ENCODE measurements at regions of chr4 and their contacts with region 1.

Region 1: DNA sequence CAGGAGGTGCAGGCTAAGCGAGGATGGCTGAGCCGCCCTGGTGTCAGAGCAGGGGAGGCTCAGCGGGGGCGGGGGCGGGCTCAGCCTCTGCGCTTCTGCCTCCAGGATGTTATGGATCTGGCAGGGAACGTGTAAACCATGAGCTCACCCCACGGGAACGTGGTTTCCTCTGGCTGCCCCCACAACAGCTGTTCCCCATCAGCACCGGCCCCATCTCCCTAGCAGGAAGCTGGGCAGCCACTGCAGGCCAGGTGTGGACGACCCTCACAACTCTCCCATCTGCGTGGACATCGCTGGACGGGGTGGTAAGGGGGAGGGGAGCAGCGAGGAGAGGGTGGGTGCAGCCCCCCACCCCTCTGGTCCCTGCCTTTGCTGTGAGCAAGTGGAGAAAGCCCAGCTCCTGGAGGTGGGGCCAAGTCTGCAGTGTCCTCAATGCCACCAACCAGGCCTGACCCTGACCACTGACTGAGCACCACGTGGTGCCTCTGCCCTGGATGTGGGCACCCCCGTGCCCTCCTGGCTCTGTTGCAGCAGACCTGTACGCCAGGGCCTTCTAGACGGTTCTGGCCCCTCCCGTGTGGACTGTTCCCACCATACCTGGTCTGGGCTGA is 28.1 kb upstream of the SPON2 start:
- DNase-seq: peak in 1 of 9 donors; percentile 26
- ATAC-seq: no peak
- H3K4me3 ChIP-seq: peak overlapping the region; percentile 85
- H3K4me3 Mint-ChIP-seq: peak overlapping the region; percentile 29 to 93 (median 84)
- H3K27ac ChIP-seq: peak overlapping the region; percentile 68
- H3K27ac Mint-ChIP-seq: peak overlapping the region in 5 of 9 donors; percentile 19 to 99 (median 59)
- H3K4me1 ChIP-seq: peaks cover 21 to 59% of the 10 kb centered on the region in 2 donors
- H3K4me1 Mint-ChIP-seq: peaks cover 12 to 57% (median 43%) of the 10 kb centered on the region in 7 donors
- H3K27me3 ChIP-seq: no peaks in the 10 kb centered on the region
- H3K27me3 Mint-ChIP-seq: no peaks in the 10 kb centered on the region

Region 2: GRCh38 chr4:1011022-1011694 is 189.4 kb before region 1 on chr4 and contains the start of gene FGFRL1:
- CTCF ChIA-PET with region 1: no interaction called
- POLR2A ChIA-PET with region 1: no interaction called
- intact Hi-C with region 1: loop called in 1 of 2 experiments (anchors 1 kb)
- DNase-seq: peak; percentile 78 to 95 (median 87)
- ATAC-seq: peak; percentile 78
- H3K4me3 ChIP-seq: peak within 1 kb of the TSS; percentile 77
- H3K4me3 Mint-ChIP-seq: peak within 1 kb of the TSS; percentile 86 to 97 (median 89)
- H3K27ac ChIP-seq: peak within 1 kb of the TSS; percentile 83
- H3K27ac Mint-ChIP-seq: peak within 1 kb of the TSS; percentile 76 to 96 (median 92)
- H3K4me1 ChIP-seq: peaks cover 0 to 10% of the 10 kb centered on the region in 2 donors
- H3K4me1 Mint-ChIP-seq: peaks cover 15 to 21% (median 18%) of the 10 kb centered on the region in 7 donors
- H3K27me3 ChIP-seq: no peaks in the 10 kb centered on the region
- H3K27me3 Mint-ChIP-seq: peaks cover 24 to 31% (median 27%) of the 10 kb centered on the region in 5 donors
- total RNA-seq, gene FGFRL1: 10.6 to 28.1 (median 22.0) TPM

Region 3: GRCh38 chr4:1187182-1187581 is 13.3 kb before region 1 on chr4:
- CTCF ChIA-PET with region 1: no interaction called
- POLR2A ChIA-PET with region 1: interaction called, 5 read pairs
- intact Hi-C with region 1: loop called in 1 of 2 experiments (anchors 1 kb)
- DNase-seq: peak in 4 of 9 donors; percentile 44 to 54 (median 49)
- ATAC-seq: peak; percentile 94
- H3K4me3 ChIP-seq: no peak overlapping the region
- H3K4me3 Mint-ChIP-seq: peak overlapping the region in 1 of 10 donors; percentile 13
- H3K27ac ChIP-seq: no peak overlapping the region
- H3K27ac Mint-ChIP-seq: peak overlapping the region in 4 of 9 donors; percentile 4 to 59 (median 38)
- H3K4me1 ChIP-seq: peaks cover 0 to 24% of the 10 kb centered on the region in 2 donors
- H3K4me1 Mint-ChIP-seq: peaks cover 9 to 31% (median 15%) of the 10 kb centered on the region in 7 donors
- H3K27me3 ChIP-seq: no peaks in the 10 kb centered on the region
- H3K27me3 Mint-ChIP-seq: no peaks in the 10 kb centered on the region

Region 4: GRCh38 chr4:1216869-1217294 is 16.4 kb after region 1 on chr4:
- CTCF ChIA-PET with region 1: no interaction called
- POLR2A ChIA-PET with region 1: interaction called, 8 read pairs
- intact Hi-C with region 1: loop called (anchors 2 kb)
- DNase-seq: peak; percentile 47 to 75 (median 70)
- ATAC-seq: peak; percentile 83
- H3K4me3 ChIP-seq: peak overlapping the region; percentile 22
- H3K4me3 Mint-ChIP-seq: peak overlapping the region; percentile 61 to 77 (median 76)
- H3K27ac ChIP-seq: peak overlapping the region; percentile 52
- H3K27ac Mint-ChIP-seq: peak overlapping the region; percentile 26 to 84 (median 67)
- H3K4me1 ChIP-seq: peaks cover 25 to 27% of the 10 kb centered on the region in 2 donors
- H3K4me1 Mint-ChIP-seq: peaks cover 26 to 50% (median 32%) of the 10 kb centered on the region in 7 donors
- H3K27me3 ChIP-seq: no peaks in the 10 kb centered on the region
- H3K27me3 Mint-ChIP-seq: no peaks in the 10 kb centered on the region

Region 5: DNA sequence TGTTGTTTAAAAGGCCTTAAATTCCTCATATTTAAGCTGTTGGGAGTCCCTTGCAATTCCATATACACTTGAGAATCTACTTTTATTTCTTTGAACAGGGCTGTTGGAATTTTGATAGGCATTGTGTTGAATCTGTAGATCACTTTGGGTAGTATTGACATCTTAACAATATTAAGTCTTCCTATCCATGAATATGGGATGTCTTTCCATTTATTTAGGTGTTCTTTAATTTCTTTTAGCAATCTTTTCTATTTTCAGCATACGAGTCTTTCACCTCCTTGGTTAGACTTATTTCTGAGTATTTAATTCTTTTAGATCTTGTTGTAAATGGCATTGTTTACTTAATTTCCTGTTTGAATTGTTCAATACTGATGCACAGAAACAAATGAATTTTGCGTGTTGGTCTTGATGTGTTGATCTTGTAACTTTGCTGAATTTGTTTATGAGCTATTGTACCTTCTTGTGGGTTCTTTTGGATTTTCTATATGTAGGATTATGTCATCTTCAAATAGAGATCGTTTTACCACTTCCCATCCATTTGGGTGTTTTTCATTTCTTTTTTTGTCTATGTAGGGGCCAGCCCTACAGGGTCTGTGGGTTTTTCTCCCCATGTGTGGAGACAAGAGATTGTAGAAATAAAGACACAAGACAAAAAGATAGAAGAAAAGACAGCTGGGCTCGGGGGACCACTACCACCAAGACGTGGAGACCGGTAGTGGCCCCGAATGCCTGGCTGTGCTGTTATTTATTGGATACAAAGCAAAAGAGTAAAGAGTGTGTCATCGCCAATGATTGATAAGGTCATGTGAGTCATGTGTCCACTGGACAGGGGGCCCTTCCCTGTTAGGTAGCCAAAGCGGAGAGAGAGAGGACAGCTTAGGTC is 66.6 kb after region 1 on chr4:
- CTCF ChIA-PET with region 1: no interaction called
- POLR2A ChIA-PET with region 1: no interaction called
- intact Hi-C with region 1: loop called in 1 of 2 experiments (anchors 1 kb)
- DNase-seq: peak in 5 of 9 donors; percentile 36 to 59 (median 48)
- ATAC-seq: peak; percentile 73
- H3K4me3 ChIP-seq: peak overlapping the region; percentile 53
- H3K4me3 Mint-ChIP-seq: peak overlapping the region; percentile 49 to 87 (median 72)
- H3K27ac ChIP-seq: peak overlapping the region; percentile 45
- H3K27ac Mint-ChIP-seq: peak overlapping the region; percentile 40 to 96 (median 82)
- H3K4me1 ChIP-seq: peaks cover 0 to 7% of the 10 kb centered on the region in 2 donors
- H3K4me1 Mint-ChIP-seq: peaks cover 8 to 22% (median 15%) of the 10 kb centered on the region in 7 donors
- H3K27me3 ChIP-seq: no peaks in the 10 kb centered on the region
- H3K27me3 Mint-ChIP-seq: no peaks in the 10 kb centered on the region

Measured in naive thymus-derived CD4-positive, alpha-beta T cell (primary cell).